ENCODE measurements at regions of chr2 and their contacts with region 1.

Region 1: DNA sequence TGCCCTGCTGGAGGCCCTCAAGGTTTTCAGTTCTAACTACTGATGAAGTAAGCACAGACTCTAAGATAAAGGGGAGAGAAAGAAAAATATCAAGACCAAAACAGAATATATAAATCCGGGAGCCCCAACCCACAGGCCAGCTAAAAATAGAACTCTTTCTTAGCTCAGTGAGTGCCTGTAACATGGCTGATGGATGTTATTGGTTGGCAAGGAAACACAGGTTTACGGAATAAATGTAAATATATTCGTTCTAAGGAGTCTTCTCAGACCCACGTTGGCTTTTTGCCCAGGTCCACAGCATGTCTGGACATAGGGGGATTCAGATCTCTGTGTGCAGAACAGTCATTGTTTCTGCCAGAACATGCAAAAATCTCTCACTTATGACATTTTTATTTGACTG is 139.0 kb upstream of the SERPINE2 start:
- DNase-seq: no peak
- ATAC-seq: no peak
- H3K4me3 ChIP-seq: no peak overlapping the region
- H3K27ac ChIP-seq: no peak overlapping the region
- H3K4me1 ChIP-seq: peaks cover 25% of the 10 kb centered on the region
- H3K27me3 ChIP-seq: peaks cover 2 to 18% of the 10 kb centered on the region in 2 experiments; a peak in 3 of 5 replicates
- CTCF ChIP-seq: no peak
- EP300 ChIP-seq: no peak
- POLR2A ChIP-seq: no peak
- RAD21 ChIP-seq: no peak

Region 2: DNA sequence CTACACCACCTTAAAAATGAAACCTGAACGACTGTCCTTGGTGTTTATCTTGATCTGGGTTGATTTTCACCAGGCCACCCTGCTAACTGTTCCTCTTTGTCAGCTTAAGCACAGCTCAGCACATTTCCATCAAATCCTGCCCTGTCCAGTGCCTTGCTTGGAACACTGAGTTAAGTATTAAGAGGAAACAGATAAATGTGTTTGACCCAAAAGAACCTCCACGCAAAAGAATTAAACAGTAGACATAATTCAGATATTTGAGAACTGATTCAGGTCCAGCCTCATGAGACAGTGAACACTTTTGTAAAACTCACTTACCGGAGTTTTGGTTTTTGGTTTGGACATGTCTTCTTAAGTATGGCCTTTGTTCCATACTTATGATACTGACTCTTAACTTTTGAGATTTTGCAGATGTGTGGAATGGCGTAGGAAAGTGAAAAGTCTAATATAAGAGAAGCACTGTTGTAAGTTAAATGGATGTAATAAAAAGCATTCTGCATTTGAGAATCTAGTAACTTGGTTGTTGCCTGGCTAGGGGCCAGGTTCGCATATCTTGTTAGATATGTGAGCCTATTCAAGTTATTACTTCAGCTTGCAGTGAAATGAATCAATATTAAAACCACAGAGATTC is 50.1 kb before region 1 on chr2:
- CTCF ChIA-PET with region 1: no interaction called
- POLR2A ChIA-PET with region 1: no interaction called
- in situ Hi-C with region 1: no loop called
- intact Hi-C with region 1: loop called (anchors 2 kb)
- DNase-seq: no peak
- ATAC-seq: peak; percentile 39
- H3K4me3 ChIP-seq: no peak overlapping the region
- H3K27ac ChIP-seq: no peak overlapping the region
- H3K4me1 ChIP-seq: peaks cover 19% of the 10 kb centered on the region
- H3K27me3 ChIP-seq: peaks cover under 1 to 33% of the 10 kb centered on the region in 2 experiments
- CTCF ChIP-seq: no peak
- EP300 ChIP-seq: no peak
- POLR2A ChIP-seq: no peak
- RAD21 ChIP-seq: no peak

Region 3: DNA sequence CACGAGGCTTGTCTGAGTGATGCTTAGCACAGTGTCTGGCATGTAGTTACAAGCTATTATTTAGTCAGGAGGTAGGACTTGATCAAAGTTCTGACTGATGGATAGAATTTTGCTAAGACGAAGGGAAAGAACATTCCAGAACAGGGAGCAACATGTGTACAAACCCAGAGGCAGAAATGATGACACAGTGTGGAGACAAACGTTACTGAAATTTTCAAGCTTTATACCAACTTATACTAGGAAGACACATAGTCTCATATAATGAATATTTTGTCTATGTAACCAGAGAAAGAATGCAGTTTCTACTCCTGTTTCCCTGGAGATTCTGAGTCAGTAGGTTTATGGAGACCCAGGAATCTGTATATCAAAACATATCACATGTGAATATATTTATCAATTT is 100.5 kb after region 1 on chr2:
- CTCF ChIA-PET with region 1: no interaction called
- POLR2A ChIA-PET with region 1: no interaction called
- in situ Hi-C with region 1: no loop called
- intact Hi-C with region 1: loop called (anchors 10 kb)
- DNase-seq: no peak
- ATAC-seq: no peak
- H3K4me3 ChIP-seq: no peak overlapping the region
- H3K27ac ChIP-seq: no peak overlapping the region
- H3K4me1 ChIP-seq: 0 out of 2 replicates have a peak, but pooled peaks cover 5% of the 10 kb centered on the region
- H3K27me3 ChIP-seq: no peaks in the 10 kb centered on the region
- CTCF ChIP-seq: no peak
- EP300 ChIP-seq: no peak
- POLR2A ChIP-seq: no peak
- RAD21 ChIP-seq: no peak